B cell (primary cell): ENCODE measurements at regions of chr3 and their contacts with region 1.

Region 1: DNA sequence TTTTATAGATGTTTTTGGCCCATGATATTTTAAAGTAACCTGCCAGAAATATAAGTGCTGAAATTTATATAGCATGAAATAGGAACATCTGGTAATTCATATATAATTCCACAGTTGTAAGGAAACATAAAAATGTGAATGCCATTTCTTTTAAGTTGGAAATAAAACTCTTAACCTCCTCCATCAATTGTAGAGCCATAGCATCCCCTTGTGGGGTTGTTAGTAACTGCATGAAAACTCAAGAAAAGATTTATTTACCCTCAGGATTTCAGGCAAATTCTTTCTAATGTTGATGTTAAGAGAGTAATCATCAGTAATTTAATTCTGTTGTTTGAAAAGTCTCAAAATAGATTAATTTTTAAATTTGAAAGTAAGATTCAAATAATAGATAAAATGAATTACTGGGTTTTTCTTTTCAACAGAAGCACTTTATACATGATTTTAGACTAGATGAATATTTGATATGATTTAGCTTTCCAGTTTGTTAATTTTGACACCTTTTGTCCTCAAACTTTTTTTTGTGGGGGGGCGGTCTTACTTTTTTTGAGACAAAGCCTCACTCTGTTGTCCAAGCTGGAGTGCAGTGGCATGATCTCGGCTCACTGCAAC is 74.7 kb downstream of the RASA2 start:
- DNase-seq: peak; percentile 75
- ATAC-seq: peak; percentile 54
- H3K4me3 ChIP-seq: no peak overlapping the region
- H3K4me3 Mint-ChIP-seq: no peak overlapping the region
- H3K27ac ChIP-seq: peak overlapping the region in 1 of 2 donors; percentile 41
- H3K27ac Mint-ChIP-seq: no peak overlapping the region
- H3K4me1 ChIP-seq: peaks cover 11 to 13% of the 10 kb centered on the region in 2 donors
- H3K4me1 Mint-ChIP-seq: peaks cover 6% of the 10 kb centered on the region
- H3K27me3 ChIP-seq: no peaks in the 10 kb centered on the region
- H3K27me3 Mint-ChIP-seq: no peaks in the 10 kb centered on the region
- CTCF ChIP-seq: peak; percentile 100

Region 2: GRCh38 chr3:141303481-141304223 is 257.9 kb before region 1 on chr3:
- CTCF ChIA-PET with region 1: interaction called, 12 read pairs
- POLR2A ChIA-PET with region 1: no interaction called
- intact Hi-C with region 1: loop called (anchors 2 kb)
- DNase-seq: peak; percentile 83
- ATAC-seq: peak; percentile 78
- H3K4me3 ChIP-seq: no peak overlapping the region
- H3K4me3 Mint-ChIP-seq: no peak overlapping the region
- H3K27ac ChIP-seq: no peak overlapping the region
- H3K27ac Mint-ChIP-seq: no peak overlapping the region
- H3K4me1 ChIP-seq: peaks cover 0 to 5% of the 10 kb centered on the region in 2 donors
- H3K4me1 Mint-ChIP-seq: no peaks in the 10 kb centered on the region
- H3K27me3 ChIP-seq: no peaks in the 10 kb centered on the region
- H3K27me3 Mint-ChIP-seq: no peaks in the 10 kb centered on the region
- CTCF ChIP-seq: peak; percentile 84

Region 3: GRCh38 chr3:141471160-141471559 is 90.4 kb before region 1 on chr3:
- CTCF ChIA-PET with region 1: interaction called, 67 read pairs
- POLR2A ChIA-PET with region 1: no interaction called
- intact Hi-C with region 1: loop called (anchors 1 kb)
- DNase-seq: no peak
- ATAC-seq: peak; percentile 14
- H3K4me3 ChIP-seq: no peak overlapping the region
- H3K4me3 Mint-ChIP-seq: no peak overlapping the region
- H3K27ac ChIP-seq: no peak overlapping the region
- H3K27ac Mint-ChIP-seq: no peak overlapping the region
- H3K4me1 ChIP-seq: peaks cover 0 to 4% of the 10 kb centered on the region in 2 donors
- H3K4me1 Mint-ChIP-seq: peaks cover 8% of the 10 kb centered on the region
- H3K27me3 ChIP-seq: no peaks in the 10 kb centered on the region
- H3K27me3 Mint-ChIP-seq: no peaks in the 10 kb centered on the region
- CTCF ChIP-seq: no peak

Region 4: GRCh38 chr3:141482250-141483017 is 79.1 kb before region 1 on chr3:
- CTCF ChIA-PET with region 1: interaction called, 26 read pairs
- POLR2A ChIA-PET with region 1: no interaction called
- intact Hi-C with region 1: no loop called
- DNase-seq: no peak
- ATAC-seq: no peak
- H3K4me3 ChIP-seq: no peak overlapping the region
- H3K4me3 Mint-ChIP-seq: no peak overlapping the region
- H3K27ac ChIP-seq: no peak overlapping the region
- H3K27ac Mint-ChIP-seq: no peak overlapping the region
- H3K4me1 ChIP-seq: peaks cover 20 to 24% of the 10 kb centered on the region in 2 donors
- H3K4me1 Mint-ChIP-seq: peaks cover 41% of the 10 kb centered on the region
- H3K27me3 ChIP-seq: no peaks in the 10 kb centered on the region
- H3K27me3 Mint-ChIP-seq: no peaks in the 10 kb centered on the region
- CTCF ChIP-seq: no peak

Region 5: GRCh38 chr3:141523615-141524375 is 37.7 kb before region 1 on chr3:
- CTCF ChIA-PET with region 1: interaction called, 8 read pairs
- POLR2A ChIA-PET with region 1: no interaction called
- intact Hi-C with region 1: loop called (anchors 5 kb)
- DNase-seq: no peak
- ATAC-seq: no peak
- H3K4me3 ChIP-seq: no peak overlapping the region
- H3K4me3 Mint-ChIP-seq: no peak overlapping the region
- H3K27ac ChIP-seq: peak overlapping the region in 1 of 2 donors; percentile 80
- H3K27ac Mint-ChIP-seq: peak overlapping the region; percentile 87
- H3K4me1 ChIP-seq: peaks cover 39 to 67% of the 10 kb centered on the region in 2 donors
- H3K4me1 Mint-ChIP-seq: peaks cover 68% of the 10 kb centered on the region
- H3K27me3 ChIP-seq: no peaks in the 10 kb centered on the region
- H3K27me3 Mint-ChIP-seq: no peaks in the 10 kb centered on the region
- CTCF ChIP-seq: no peak

Region 6: DNA sequence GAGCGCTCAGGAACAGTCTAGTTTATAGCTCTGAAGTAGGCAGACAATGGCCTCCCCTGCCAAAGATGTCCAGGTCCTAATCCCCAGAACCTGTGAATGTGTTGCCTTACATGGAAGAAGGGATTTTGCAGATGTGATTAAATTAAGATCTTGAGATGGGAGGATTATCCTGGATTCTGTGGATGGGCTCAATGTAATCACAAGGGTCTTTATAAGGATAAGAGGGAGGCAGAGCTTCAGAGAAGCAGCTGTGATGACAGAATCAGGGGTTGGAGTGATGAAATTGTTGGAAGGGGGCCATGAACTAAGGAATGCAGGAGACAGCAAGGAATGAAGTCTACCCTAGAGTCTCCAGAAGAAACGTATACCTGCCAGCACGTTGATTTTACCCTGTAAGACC is 677.9 kb after region 1 on chr3:
- CTCF ChIA-PET with region 1: no interaction called
- POLR2A ChIA-PET with region 1: no interaction called
- intact Hi-C with region 1: no loop called
- DNase-seq: no peak
- ATAC-seq: no peak
- H3K4me3 ChIP-seq: no peak overlapping the region
- H3K4me3 Mint-ChIP-seq: no peak overlapping the region
- H3K27ac ChIP-seq: no peak overlapping the region
- H3K27ac Mint-ChIP-seq: no peak overlapping the region
- H3K4me1 ChIP-seq: no peaks in the 10 kb centered on the region
- H3K4me1 Mint-ChIP-seq: no peaks in the 10 kb centered on the region
- H3K27me3 ChIP-seq: no peaks in the 10 kb centered on the region
- H3K27me3 Mint-ChIP-seq: peaks cover 24% of the 10 kb centered on the region
- CTCF ChIP-seq: no peak